Cardiac septum (tissue), 1 donor: ENCODE measurements at regions of chr12 and their contacts with region 1.

Region 1: GRCh38 chr12:38138225-38139221 is 178.1 kb upstream of the ALG10B start:
- DNase-seq: no peak

Region 2: GRCh38 chr12:38316391-38317129 is 178.0 kb after region 1 on chr12 and contains the start of gene ALG10B:
- intact Hi-C with region 1: loop called (anchors 5 kb)
- DNase-seq: peak; percentile 94
- total RNA-seq, gene ALG10B: 5.5 TPM